Heart right ventricle (tissue), 16 donors: ENCODE measurements at regions of chr2 and their contacts with region 1.

Region 1: DNA sequence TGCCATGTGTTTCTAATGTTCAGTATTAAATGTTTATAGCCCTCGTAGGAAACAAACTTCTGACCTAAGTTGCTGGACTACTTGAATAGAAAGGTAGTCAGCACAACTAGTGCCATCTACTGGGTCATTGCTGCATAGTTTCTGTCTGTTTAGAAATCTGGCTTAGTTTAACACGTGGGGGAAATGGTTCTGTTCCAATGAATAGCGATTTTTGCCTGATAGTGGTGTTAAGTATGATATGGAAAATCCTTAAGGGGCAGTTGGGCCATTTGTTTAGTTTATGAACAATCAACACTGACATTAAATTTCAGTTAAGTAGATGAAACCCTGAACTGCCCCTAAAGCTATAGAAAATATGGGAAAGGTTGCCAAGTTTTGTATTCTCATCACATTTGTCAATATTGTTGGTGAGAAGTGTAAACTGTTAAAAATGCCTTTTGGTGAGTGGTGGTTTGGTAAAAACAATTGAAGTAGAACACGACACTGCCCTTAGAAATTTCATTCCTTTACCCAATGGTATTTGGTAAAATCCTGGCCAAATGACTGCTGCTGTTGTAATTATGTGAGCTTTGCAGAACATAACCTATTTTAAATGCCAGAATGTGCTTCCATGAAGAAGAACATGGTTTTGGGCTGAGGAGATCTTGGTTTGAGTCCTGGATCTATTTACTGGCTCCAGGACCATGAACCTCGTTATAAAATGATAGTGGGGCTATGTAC is 13.2 kb downstream of the NABP1 start:
- DNase-seq: peak in 1 of 2 donors; percentile 62
- ATAC-seq: peak in 7 of 8 donors; percentile 62 to 88 (median 75)
- H3K4me3 ChIP-seq: no peak overlapping the region
- H3K27ac ChIP-seq: no peak overlapping the region
- H3K4me1 ChIP-seq: peaks cover 0 to 45% (median 11%) of the 10 kb centered on the region in 9 donors
- H3K27me3 ChIP-seq: peaks cover 0 to 5% (median 0%) of the 10 kb centered on the region in 7 donors
- CTCF ChIP-seq: peak; percentile 45 to 85 (median 74)

Region 2: GRCh38 chr2:191555092-191555742 is 136.0 kb before region 1 on chr2:
- intact Hi-C with region 1: loop called in 3 of 10 experiments (anchors 1 to 10 kb)
- DNase-seq: peak; percentile 58 to 82
- ATAC-seq: peak; percentile 86 to 95 (median 90)
- H3K4me3 ChIP-seq: no peak overlapping the region
- H3K27ac ChIP-seq: no peak overlapping the region
- H3K4me1 ChIP-seq: no peaks in the 10 kb centered on the region
- H3K27me3 ChIP-seq: peaks cover 0 to 23% (median 5%) of the 10 kb centered on the region in 7 donors
- CTCF ChIP-seq: peak; percentile 50 to 84 (median 74)

Region 3: GRCh38 chr2:191566344-191566743 is 124.8 kb before region 1 on chr2:
- intact Hi-C with region 1: loop called in 8 of 10 experiments (anchors 1 to 5 kb)
- DNase-seq: peak in 1 of 2 donors; percentile 47
- ATAC-seq: peak in 6 of 8 donors; percentile 52 to 75 (median 62)
- H3K4me3 ChIP-seq: no peak overlapping the region
- H3K27ac ChIP-seq: no peak overlapping the region
- H3K4me1 ChIP-seq: peaks cover 0 to 23% (median 0%) of the 10 kb centered on the region in 9 donors
- H3K27me3 ChIP-seq: peaks cover 0 to 32% (median 14%) of the 10 kb centered on the region in 7 donors
- CTCF ChIP-seq: peak; percentile 32 to 81 (median 74)

Region 4: DNA sequence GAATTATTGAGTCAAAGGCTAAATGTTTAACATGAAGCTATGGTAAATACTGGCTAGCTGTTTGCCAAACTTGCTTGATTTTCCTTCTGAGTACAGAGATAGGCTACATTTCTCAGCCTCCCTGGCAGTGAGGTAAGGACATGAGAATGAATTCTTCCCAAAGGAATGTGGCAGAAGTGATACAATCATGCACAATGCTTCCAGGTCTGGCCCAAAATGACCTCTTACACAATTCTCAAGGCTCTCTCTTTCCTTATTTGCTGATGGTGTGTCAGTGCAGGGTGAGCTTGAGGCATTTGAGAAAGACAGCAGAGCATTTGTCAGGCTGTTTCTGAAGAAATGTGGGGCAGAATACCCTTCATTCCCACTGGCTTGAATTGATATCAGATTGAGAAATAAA is 108.8 kb before region 1 on chr2:
- intact Hi-C with region 1: no loop called
- DNase-seq: no peak
- ATAC-seq: no peak
- H3K4me3 ChIP-seq: no peak overlapping the region
- H3K27ac ChIP-seq: no peak overlapping the region
- H3K4me1 ChIP-seq: no peaks in the 10 kb centered on the region
- H3K27me3 ChIP-seq: peaks cover 0 to 19% (median 0%) of the 10 kb centered on the region in 7 donors
- CTCF ChIP-seq: no peak